Mammary epithelial cell (primary cell): ENCODE measurements at regions of chr14 and their contacts with region 1.

Region 1: GRCh38 chr14:22986508-22987054 is 4.2 kb upstream of the AJUBA start:
- DNase-seq: peak; percentile 70
- H3K4me3 ChIP-seq: no peak overlapping the region
- H3K27ac ChIP-seq: no peak overlapping the region
- H3K4me1 ChIP-seq: no peaks in the 10 kb centered on the region
- H3K27me3 ChIP-seq: no peaks in the 10 kb centered on the region
- CTCF ChIP-seq: peak; percentile 92 to 93

Region 2: DNA sequence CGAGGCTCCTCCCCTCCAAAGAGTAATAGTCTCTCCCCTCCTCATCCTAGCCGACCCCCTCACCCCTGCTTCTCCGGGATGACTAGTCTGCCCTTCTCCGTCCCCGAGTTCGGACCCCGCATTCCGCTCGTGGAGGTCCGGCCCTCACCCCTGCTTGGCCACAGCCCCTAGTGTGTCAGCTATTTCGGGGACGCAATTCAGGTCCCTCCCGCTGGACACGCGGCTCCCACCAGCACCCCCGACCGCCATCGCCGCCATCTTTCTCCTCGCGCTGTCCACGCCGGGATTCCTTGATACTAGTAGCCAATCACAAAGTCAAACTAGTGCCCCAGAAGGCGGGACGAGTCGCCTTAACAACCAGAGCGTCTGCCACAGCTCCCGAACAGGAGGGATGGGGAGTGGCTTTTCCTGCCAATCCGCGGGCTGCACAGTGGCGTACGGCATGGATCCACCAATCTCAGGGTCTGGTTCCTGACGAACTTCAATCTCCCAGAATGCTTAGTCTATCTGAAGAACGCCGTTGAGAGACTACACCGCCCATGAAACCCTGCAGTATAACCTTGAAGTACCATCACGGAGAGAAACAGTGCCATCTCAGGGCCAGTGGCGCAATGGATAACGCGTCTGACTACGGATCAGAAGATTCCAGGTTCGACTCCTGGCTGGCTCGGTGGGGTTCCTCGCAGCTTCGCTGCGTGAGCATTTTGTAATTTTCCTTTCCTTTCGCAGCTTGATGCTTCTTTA is 57.3 kb before region 1 on chr14 and contains the start of gene PRMT5:
- CTCF ChIA-PET with region 1: interaction called, 6 read pairs
- dilution Hi-C with region 1: no loop called
- in situ Hi-C with region 1: no loop called
- intact Hi-C with region 1: loop called (anchors 1 kb)
- DNase-seq: peak; percentile 99
- H3K4me3 ChIP-seq: peak within 1 kb of the TSS; percentile 87 to 97 (median 94)
- H3K27ac ChIP-seq: peak within 1 kb of the TSS; percentile 87
- H3K4me1 ChIP-seq: peaks cover 27% of the 10 kb centered on the region
- H3K27me3 ChIP-seq: no peaks in the 10 kb centered on the region
- CTCF ChIP-seq: no peak
- total RNA-seq, gene PRMT5: 61.3 to 120 TPM

Region 3: GRCh38 chr14:22973217-22974032 is 13.2 kb before region 1 on chr14:
- CTCF ChIA-PET with region 1: interaction called, 3 read pairs
- dilution Hi-C with region 1: no loop called
- in situ Hi-C with region 1: no loop called
- intact Hi-C with region 1: loop called (anchors 1 kb)
- DNase-seq: peak; percentile 57
- H3K4me3 ChIP-seq: no peak overlapping the region
- H3K27ac ChIP-seq: no peak overlapping the region
- H3K4me1 ChIP-seq: peaks cover 40% of the 10 kb centered on the region
- H3K27me3 ChIP-seq: no peaks in the 10 kb centered on the region
- CTCF ChIP-seq: peak; percentile 51 to 64

Region 4: DNA sequence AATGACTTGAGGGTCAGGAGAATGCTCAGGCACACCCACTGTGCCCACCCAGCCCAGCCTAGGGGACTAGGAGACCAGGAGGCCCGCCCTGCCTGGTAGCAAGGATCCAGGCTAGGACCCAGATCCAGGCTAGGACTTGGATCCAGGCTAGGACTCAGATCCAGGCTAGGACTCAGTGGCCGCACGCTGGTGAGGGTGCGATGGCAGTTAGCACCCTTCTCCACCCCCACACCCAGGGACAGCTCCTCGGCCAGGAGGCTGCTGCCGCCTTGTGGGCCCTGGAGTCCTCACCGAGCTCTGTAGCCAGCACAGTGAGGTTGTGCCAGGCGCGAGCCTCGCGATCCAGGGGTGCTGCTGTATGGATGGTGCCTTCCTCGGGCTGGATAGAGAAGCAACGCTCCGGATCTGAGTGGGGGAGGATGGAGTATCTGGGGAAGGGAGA is 65.6 kb after region 1 on chr14:
- CTCF ChIA-PET with region 1: interaction called, 10 read pairs
- dilution Hi-C with region 1: loop called (anchors 10 kb)
- in situ Hi-C with region 1: loop called (anchors 5 kb)
- intact Hi-C with region 1: loop called (anchors 1 kb)
- DNase-seq: peak; percentile 40
- H3K4me3 ChIP-seq: no peak overlapping the region
- H3K27ac ChIP-seq: no peak overlapping the region
- H3K4me1 ChIP-seq: peaks cover 15% of the 10 kb centered on the region
- H3K27me3 ChIP-seq: no peaks in the 10 kb centered on the region
- CTCF ChIP-seq: peak; percentile 29 to 60

Region 5: GRCh38 chr14:23109769-23110168 is 123.2 kb after region 1 on chr14:
- CTCF ChIA-PET with region 1: no interaction called
- dilution Hi-C with region 1: no loop called
- in situ Hi-C with region 1: no loop called
- intact Hi-C with region 1: loop called (anchors 1 kb)
- DNase-seq: no peak
- H3K4me3 ChIP-seq: no peak overlapping the region
- H3K27ac ChIP-seq: no peak overlapping the region
- H3K4me1 ChIP-seq: peaks cover 9% of the 10 kb centered on the region
- H3K27me3 ChIP-seq: no peaks in the 10 kb centered on the region
- CTCF ChIP-seq: no peak